H1 (cell line): ENCODE measurements at regions of chr7 and their contacts with region 1.

Region 1: DNA sequence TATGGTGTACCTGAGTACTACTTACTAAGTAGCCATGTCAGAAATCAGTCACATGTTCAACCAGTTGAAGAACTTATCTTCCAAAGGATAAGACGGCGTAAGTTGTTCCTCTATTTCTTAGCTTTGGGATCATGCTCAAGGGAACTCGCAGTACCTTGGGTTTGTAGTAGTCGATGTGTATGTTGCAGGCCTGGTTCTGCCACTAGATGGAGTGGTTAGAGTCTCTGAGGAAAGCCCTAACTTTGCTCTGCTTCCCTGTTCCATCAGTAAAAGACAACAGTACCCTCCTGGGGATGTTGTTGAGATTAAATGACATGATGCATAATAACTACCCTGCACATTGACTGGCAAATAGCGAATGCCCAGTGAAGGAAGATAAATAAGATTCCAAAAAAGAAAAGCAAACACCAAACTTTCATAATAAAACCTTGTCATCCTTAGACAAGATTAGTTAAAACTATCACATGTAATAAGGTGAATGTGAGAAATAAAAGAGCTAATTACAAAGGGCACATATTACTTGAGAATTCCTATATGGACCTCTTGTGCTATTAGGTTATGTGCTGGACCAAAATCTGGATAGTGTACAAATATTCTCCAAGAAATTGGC is 165.9 kb downstream of the ABCA13 start:
- DNase-seq: no peak
- H3K4me3 ChIP-seq: no peak overlapping the region
- H3K27ac ChIP-seq: no peak overlapping the region
- H3K4me1 ChIP-seq: peaks cover 0 to 2% (median 0%) of the 10 kb centered on the region in 4 experiments; a peak in 3 of 7 replicates
- H3K27me3 ChIP-seq: no peaks in the 10 kb centered on the region
- CTCF ChIP-seq: peak; percentile 42 to 87 (median 65)
- EP300 ChIP-seq: no peak
- POLR2A ChIP-seq: no peak
- RAD21 ChIP-seq: peak; percentile 67 to 74

Region 2: DNA sequence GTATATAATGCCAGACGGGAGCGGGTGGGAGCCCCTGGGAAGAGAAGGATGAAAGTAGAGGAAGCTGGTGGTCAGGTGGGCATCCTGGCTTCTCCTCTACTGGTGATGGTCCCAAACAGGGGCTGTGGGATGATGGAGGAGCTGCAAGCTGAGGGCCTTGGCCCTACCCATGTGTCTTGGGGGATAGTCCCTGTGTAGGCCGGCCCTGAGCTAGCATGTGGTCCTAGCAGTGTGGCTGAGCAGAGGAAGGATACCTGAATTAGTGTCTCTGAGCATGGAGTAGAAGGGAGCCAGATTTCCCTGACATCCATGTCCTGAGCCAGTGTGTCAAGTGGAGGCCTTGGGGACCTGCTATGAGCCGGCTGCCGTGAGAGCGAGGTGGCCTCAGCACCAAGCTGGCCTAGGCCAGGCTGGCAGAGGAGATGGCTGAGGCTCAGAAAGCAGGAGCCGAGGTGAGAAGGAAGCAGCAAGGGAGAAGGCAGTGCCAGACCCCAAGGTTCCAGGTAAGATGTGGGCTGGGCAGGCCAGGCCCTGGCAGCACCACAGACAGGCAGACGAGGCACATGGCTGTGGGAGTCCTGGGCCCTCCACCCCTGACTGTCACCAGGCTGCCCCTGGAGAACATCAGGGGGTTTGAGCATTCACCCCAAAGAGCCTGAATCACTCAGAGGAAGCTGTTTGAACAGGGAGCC is 15.7 kb before region 1 on chr7:
- CTCF ChIA-PET with region 1: interaction called, 15 read pairs
- POLR2A ChIA-PET with region 1: no interaction called
- DNase-seq: no peak
- H3K4me3 ChIP-seq: no peak overlapping the region
- H3K27ac ChIP-seq: no peak overlapping the region
- H3K4me1 ChIP-seq: no peaks in the 10 kb centered on the region
- H3K27me3 ChIP-seq: no peaks in the 10 kb centered on the region
- CTCF ChIP-seq: no peak
- EP300 ChIP-seq: no peak
- POLR2A ChIP-seq: no peak
- RAD21 ChIP-seq: no peak

Region 3: GRCh38 chr7:48350515-48350914 is 13.4 kb after region 1 on chr7:
- CTCF ChIA-PET with region 1: interaction called, 16 read pairs
- POLR2A ChIA-PET with region 1: no interaction called
- DNase-seq: no peak
- H3K4me3 ChIP-seq: no peak overlapping the region
- H3K27ac ChIP-seq: no peak overlapping the region
- H3K4me1 ChIP-seq: no peaks in the 10 kb centered on the region
- H3K27me3 ChIP-seq: no peaks in the 10 kb centered on the region
- CTCF ChIP-seq: no peak
- EP300 ChIP-seq: no peak
- POLR2A ChIP-seq: no peak
- RAD21 ChIP-seq: no peak